Caco-2 (cell line): ENCODE measurements at regions of chr4 and their contacts with region 1.

Region 1: DNA sequence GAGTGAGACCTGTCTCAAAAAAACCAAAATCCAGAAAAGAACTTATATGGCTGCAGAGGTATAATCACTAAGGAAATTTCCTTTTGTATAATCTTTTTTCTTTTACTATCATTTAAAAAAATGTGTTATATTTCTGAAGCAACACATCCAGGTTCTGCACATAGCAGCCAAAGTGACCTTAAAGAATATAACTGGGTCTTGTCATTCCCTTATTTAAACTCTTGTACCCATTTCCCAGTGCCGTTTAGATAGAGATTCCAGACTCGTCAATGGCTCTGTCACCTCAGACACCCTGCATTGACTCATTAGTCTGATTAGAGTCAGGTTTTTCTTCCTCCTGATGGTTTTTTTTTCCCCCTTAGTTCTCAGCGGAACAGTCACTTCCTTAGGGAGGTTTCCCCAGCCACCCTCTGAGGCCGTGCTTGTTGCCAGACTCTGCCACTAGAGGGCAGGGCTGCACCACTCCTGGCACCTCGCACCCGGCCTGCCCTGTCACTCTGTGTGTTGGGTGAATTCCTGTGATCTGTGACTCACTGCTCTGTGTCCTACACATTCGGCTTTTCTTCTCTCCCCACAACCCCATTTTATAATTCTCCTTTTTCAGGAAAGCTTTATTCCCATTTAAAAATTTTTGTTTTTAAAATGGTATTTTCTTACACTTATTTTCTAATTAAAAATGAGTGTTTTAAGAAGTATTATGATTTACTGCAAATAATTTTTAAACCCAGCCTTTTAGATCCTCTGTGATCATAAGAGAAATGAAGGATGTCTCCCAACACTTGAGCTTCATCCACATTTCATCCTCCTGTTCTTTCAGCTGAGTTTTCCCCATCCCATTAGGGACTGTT is 32.1 kb downstream of the HTT start:
- DNase-seq: peak; percentile 73 to 86
- H3K4me3 ChIP-seq: no peak overlapping the region
- H3K4me3 Mint-ChIP-seq: no peak overlapping the region
- H3K27ac Mint-ChIP-seq: no peak overlapping the region
- H3K4me1 ChIP-seq: no peaks in the 10 kb centered on the region
- H3K4me1 Mint-ChIP-seq: peaks cover 6% of the 10 kb centered on the region
- H3K27me3 ChIP-seq: no peaks in the 10 kb centered on the region
- H3K27me3 Mint-ChIP-seq: no peaks in the 10 kb centered on the region
- CTCF ChIP-seq: peak; percentile 92 to 96

Region 2: GRCh38 chr4:3047464-3048286 is 58.9 kb before region 1 on chr4:
- CTCF ChIA-PET with region 1: no interaction called
- POLR2A ChIA-PET with region 1: no interaction called
- intact Hi-C with region 1: loop called (anchors 5 kb)
- DNase-seq: peak; percentile 78 to 80
- H3K4me3 ChIP-seq: no peak overlapping the region
- H3K4me3 Mint-ChIP-seq: peak overlapping the region; percentile 70
- H3K27ac Mint-ChIP-seq: no peak overlapping the region
- H3K4me1 ChIP-seq: peaks cover 14% of the 10 kb centered on the region
- H3K4me1 Mint-ChIP-seq: peaks cover 13% of the 10 kb centered on the region
- H3K27me3 ChIP-seq: no peaks in the 10 kb centered on the region
- H3K27me3 Mint-ChIP-seq: no peaks in the 10 kb centered on the region
- CTCF ChIP-seq: peak; percentile 54 to 84

Region 3: DNA sequence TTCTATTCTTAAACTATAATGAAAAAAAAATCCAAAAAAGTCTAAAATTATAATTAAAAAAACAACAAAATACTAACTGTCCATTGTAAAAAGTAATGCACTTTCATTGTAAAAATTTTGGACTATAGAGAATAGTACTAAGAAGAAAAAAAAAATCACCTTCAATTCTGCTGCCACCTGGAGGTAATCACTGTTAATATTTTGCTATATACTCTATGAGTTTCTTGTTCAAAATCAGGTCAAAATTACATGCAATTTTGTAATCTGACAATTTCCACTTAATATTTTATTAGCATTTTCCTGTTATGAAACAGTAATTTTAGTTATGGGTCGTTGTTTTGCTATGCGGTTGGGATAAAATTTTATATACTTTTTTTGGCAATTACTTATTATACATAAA is 29.9 kb after region 1 on chr4:
- CTCF ChIA-PET with region 1: no interaction called
- POLR2A ChIA-PET with region 1: no interaction called
- intact Hi-C with region 1: loop called (anchors 2 kb)
- DNase-seq: no peak
- H3K4me3 ChIP-seq: no peak overlapping the region
- H3K4me3 Mint-ChIP-seq: no peak overlapping the region
- H3K27ac Mint-ChIP-seq: no peak overlapping the region
- H3K4me1 ChIP-seq: no peaks in the 10 kb centered on the region
- H3K4me1 Mint-ChIP-seq: no peaks in the 10 kb centered on the region
- H3K27me3 ChIP-seq: no peaks in the 10 kb centered on the region
- H3K27me3 Mint-ChIP-seq: no peaks in the 10 kb centered on the region
- CTCF ChIP-seq: peak in 1 of 2 experiments; percentile 22

Region 4: DNA sequence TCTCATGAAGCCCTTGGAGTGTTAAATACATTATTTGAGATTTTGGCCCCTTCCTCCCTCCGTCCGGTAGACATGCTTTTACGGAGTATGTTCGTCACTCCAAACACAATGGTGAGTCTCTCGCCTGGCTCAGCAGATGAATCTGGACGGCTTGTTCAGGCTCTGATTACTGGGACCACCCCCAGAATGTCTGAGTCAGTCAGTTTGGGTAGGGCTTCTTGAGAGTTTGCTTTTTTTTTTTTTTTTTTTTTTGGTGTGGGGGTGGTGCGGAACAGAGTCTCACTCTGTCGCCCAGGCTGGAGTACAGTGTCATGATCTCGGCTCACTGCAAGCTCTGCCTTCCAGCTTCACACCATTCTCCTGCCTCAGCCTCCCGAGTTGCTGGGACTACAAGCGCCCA is 80.0 kb after region 1 on chr4:
- CTCF ChIA-PET with region 1: no interaction called
- POLR2A ChIA-PET with region 1: no interaction called
- intact Hi-C with region 1: loop called (anchors 10 kb)
- DNase-seq: no peak
- H3K4me3 ChIP-seq: no peak overlapping the region
- H3K4me3 Mint-ChIP-seq: no peak overlapping the region
- H3K27ac Mint-ChIP-seq: no peak overlapping the region
- H3K4me1 ChIP-seq: no peaks in the 10 kb centered on the region
- H3K4me1 Mint-ChIP-seq: no peaks in the 10 kb centered on the region
- H3K27me3 ChIP-seq: no peaks in the 10 kb centered on the region
- H3K27me3 Mint-ChIP-seq: no peaks in the 10 kb centered on the region
- CTCF ChIP-seq: no peak